BJ (cell line): ENCODE measurements at regions of chr12 and their contacts with region 1.

Region 1: DNA sequence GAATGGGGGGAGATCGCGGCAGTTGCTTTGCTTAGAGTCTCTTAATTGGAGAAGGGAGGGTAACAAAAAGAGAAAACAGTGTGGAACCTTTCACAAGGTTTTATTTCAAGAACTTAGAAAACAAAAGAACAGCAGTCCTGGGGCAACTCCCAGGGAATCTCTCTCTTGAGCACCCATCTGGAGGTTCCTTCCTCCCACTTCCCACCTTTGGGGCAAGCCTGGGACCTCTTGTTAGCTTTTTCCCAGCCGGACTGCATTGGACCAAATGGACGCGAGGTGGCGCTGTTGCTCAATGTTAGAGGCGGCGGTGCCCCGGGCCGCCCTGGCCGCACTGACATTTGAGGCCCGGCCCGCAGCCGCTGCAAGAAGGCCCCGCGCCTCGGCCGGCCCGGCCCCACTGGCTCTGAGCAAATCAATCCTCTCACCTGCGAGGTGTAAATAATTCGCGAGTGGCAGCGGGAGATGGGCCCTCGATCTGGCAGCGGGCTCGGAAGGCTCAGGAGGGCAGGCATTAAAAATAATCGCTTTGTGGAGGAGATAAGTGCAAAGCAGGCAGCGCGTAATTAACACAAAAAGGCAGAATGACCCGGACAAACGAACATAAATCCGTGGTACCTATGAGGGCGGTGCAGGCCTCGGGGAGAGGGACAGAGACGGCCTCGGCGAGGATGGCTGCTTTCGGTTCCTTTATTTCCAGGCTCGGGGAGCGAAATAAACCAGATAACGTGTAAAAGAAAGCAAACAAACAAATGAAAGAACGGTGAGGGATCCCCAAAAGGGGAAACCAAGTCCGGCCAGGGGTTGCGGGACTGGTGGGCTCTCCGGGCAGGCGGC is 2.7 kb upstream of the HOXC8 start:
- DNase-seq: no peak
- H3K4me3 ChIP-seq: no peak overlapping the region
- H3K27me3 ChIP-seq: peaks cover 14% of the 10 kb centered on the region
- CTCF ChIP-seq: peak; percentile 80

Region 2: GRCh38 chr12:53984901-53985709 is 21.0 kb before region 1 on chr12 and contains the start of gene HOXC10:
- CTCF ChIA-PET with region 1: interaction called, 81 read pairs
- POLR2A ChIA-PET with region 1: interaction called, 5 read pairs
- DNase-seq: no peak
- H3K4me3 ChIP-seq: peak within 1 kb of the TSS; percentile 60
- H3K27me3 ChIP-seq: peaks cover 2% of the 10 kb centered on the region; the same call in 1 of the 2 replicates
- CTCF ChIP-seq: peak; percentile 83
- polyA plus RNA-seq, gene HOXC10: 13.9 and 14.9 TPM in 2 replicates

Region 3: DNA sequence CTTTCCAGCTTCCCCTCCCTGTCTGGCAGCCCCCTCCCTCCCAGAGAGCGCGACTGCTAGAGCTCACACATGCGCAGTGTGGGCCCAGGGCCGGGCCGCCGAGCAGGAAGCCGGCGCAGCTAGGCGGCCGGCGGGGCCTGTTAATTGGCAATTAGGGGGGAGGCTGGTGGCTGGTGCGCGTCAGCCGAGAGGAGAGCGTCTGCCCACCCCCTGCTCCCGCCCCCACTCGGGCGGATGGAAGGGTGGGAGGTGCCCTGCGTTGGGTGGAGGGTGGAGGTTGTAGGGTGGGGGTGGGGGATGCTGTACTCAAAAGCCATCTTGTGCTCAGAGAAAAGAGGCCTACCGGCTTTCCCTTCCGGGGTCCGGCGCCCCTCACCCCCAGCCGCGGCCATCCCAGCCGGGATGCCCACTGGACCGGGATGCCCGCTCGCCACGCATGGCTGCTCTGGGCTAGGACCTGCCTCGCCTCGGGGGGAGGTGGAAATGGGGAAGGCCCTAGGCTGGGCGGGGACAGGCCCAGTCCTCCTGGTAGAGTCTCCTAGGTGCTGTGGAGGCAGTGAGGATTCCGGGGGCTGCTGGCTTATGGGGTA is 11.9 kb after region 1 on chr12:
- CTCF ChIA-PET with region 1: interaction called, 22 read pairs
- POLR2A ChIA-PET with region 1: interaction called, 9 read pairs
- DNase-seq: no peak
- H3K4me3 ChIP-seq: peak overlapping the region; percentile 72
- H3K27me3 ChIP-seq: peaks cover 13% of the 10 kb centered on the region
- CTCF ChIP-seq: no peak

Region 4: DNA sequence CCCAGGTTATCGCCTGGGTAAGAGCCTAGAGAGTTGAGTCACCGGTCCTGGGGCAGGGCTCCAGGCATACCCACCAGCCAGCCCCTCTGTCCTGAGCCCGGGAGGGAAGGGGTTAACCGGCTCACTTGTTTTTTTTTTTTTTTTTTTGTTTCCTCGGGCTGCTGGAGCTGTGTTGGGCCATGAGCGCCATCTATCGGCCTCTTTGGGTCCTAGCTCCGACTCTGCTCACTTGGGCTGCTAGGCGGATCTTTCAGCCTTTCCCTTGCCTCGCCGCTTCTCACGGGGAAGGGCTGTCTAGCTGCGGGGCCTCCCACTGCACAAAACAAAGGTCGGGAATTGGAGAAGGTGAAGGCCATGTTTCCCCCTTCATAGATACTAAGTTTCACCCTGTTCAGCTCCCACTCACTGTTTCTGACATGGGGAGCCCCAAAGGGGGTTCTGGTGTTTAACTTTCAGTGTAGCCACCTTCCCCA is 185.5 kb after region 1 on chr12:
- CTCF ChIA-PET with region 1: interaction called, 56 read pairs
- POLR2A ChIA-PET with region 1: interaction called, 8 read pairs
- DNase-seq: no peak
- H3K4me3 ChIP-seq: no peak overlapping the region
- H3K27me3 ChIP-seq: peaks cover 6% of the 10 kb centered on the region
- CTCF ChIP-seq: peak; percentile 92

Region 5: GRCh38 chr12:54201001-54201794 is 195.1 kb after region 1 on chr12:
- CTCF ChIA-PET with region 1: interaction called, 213 read pairs
- POLR2A ChIA-PET with region 1: interaction called, 3 read pairs
- DNase-seq: no peak
- H3K4me3 ChIP-seq: no peak overlapping the region
- H3K27me3 ChIP-seq: peaks cover 10% of the 10 kb centered on the region
- CTCF ChIP-seq: peak; percentile 96

Region 6: GRCh38 chr12:54207484-54208294 is 201.6 kb after region 1 on chr12:
- CTCF ChIA-PET with region 1: interaction called, 213 read pairs
- POLR2A ChIA-PET with region 1: interaction called, 3 read pairs
- DNase-seq: no peak
- H3K4me3 ChIP-seq: no peak overlapping the region
- H3K27me3 ChIP-seq: peaks cover 14% of the 10 kb centered on the region
- CTCF ChIP-seq: peak; percentile 98